Naive thymus-derived CD4-positive, alpha-beta T cell (primary cell): ENCODE measurements at regions of chr19 and their contacts with region 1.

Region 1: DNA sequence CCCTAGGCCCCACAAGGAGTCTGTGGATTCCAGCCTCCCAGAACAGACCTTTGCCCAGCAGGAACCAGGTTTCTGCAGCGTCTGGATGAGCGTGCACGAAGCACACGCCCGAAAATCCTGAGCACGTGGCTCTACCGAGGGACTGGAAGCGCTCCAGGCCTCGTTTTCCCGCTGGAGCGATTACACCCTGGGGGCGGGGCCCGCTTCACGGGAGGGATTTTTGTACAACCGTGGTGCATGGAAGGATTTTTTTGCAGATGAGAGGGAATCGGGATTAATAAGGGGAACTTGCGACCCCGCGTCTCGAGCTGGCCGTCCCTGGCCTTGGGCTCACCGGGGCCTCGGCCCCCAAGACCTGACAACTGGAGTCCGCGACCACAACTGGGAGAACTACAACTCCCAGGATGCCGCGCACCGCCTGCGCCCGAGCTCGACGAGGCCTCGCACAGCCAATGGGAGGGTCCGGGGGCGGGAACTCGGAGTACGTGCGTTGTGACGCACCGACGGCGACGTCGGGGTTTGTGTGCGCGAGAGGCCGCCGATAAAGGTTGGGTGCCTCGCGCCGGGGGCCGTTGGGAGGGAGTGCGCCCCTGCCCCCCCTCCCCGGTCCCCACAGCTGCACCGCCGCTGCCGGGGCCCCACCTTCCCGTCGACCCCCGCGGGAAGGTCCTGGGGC is at the start of gene ZNF628:
- DNase-seq: peak; percentile 88 to 98 (median 96)
- ATAC-seq: peak; percentile 96
- H3K4me3 ChIP-seq: peak within 1 kb of the TSS; percentile 96
- H3K4me3 Mint-ChIP-seq: peak within 1 kb of the TSS; percentile 83 to 93 (median 90)
- H3K27ac ChIP-seq: peak within 1 kb of the TSS; percentile 90
- H3K27ac Mint-ChIP-seq: peak within 1 kb of the TSS; percentile 81 to 95 (median 92)
- H3K4me1 ChIP-seq: peaks cover 14 to 15% of the 10 kb centered on the region in 2 donors
- H3K4me1 Mint-ChIP-seq: peaks cover 15 to 41% (median 29%) of the 10 kb centered on the region in 7 donors
- H3K27me3 ChIP-seq: no peaks in the 10 kb centered on the region
- H3K27me3 Mint-ChIP-seq: no peaks in the 10 kb centered on the region
- total RNA-seq, gene ZNF628: 6.6 to 27.2 (median 9.0) TPM

Region 2: DNA sequence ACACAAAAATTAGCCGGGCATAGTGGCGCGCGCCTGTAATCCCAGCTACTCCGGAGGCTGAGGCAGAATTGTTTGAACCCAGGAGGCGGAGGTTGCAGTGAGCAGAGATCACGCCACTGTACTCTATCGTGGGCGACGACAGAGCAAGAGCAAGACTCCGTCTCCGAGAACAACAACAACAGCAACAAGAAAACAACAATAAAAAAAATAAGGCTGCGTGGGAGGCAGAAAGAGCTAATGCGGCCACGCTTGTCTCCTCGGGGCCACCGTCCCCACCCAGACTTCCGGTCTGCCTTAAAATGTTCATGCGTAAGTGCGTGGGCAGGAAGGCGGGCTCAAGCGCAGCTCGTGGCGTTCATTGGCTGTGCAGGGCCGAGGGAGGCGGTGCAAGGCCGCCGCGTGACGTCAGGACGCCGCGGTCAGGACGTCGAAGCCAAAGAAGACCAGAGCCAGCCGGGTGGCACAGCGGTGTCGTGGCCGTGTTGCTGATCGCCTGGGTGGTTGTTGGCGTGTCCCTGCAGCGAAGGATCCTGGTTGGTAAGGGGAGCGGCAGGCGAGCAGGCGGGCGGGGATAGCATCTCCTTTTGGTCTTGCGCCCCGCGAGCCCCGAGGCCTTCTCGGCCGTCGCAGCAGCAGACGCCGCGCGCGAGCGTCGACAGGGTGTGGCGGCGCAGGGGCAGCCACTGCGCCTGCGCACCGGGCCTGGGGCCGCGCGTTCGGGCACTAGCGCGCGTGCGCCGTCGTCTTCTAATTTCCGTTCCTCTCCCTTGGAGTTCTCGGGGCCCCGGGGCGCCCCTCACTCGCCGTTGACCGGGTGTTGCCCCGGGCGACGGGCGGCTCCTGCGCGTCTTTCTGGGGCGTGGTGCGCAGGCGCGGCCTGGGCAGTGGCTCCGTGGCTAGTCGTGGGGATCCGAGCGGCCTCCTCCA is 1027.2 kb before region 1 on chr19 and contains the start of gene LENG8:
- CTCF ChIA-PET with region 1: no interaction called
- POLR2A ChIA-PET with region 1: interaction called, 3 read pairs
- intact Hi-C with region 1: loop called in 1 of 2 experiments (anchors 2 kb)
- DNase-seq: peak; percentile 95 to 99 (median 98)
- ATAC-seq: peak; percentile 94
- H3K4me3 ChIP-seq: peak within 1 kb of the TSS; percentile 85
- H3K4me3 Mint-ChIP-seq: peak within 1 kb of the TSS; percentile 93 to 99 (median 97)
- H3K27ac ChIP-seq: peak within 1 kb of the TSS; percentile 94
- H3K27ac Mint-ChIP-seq: peak within 1 kb of the TSS; percentile 97 to 100 (median 100)
- H3K4me1 ChIP-seq: peaks cover 19 to 39% of the 10 kb centered on the region in 2 donors
- H3K4me1 Mint-ChIP-seq: peaks cover 31 to 61% (median 54%) of the 10 kb centered on the region in 7 donors
- H3K27me3 ChIP-seq: no peaks in the 10 kb centered on the region
- H3K27me3 Mint-ChIP-seq: peaks cover 0 to 3% (median 0%) of the 10 kb centered on the region in 5 donors
- total RNA-seq, gene LENG8: 238 to 685 (median 503) TPM

Region 3: DNA sequence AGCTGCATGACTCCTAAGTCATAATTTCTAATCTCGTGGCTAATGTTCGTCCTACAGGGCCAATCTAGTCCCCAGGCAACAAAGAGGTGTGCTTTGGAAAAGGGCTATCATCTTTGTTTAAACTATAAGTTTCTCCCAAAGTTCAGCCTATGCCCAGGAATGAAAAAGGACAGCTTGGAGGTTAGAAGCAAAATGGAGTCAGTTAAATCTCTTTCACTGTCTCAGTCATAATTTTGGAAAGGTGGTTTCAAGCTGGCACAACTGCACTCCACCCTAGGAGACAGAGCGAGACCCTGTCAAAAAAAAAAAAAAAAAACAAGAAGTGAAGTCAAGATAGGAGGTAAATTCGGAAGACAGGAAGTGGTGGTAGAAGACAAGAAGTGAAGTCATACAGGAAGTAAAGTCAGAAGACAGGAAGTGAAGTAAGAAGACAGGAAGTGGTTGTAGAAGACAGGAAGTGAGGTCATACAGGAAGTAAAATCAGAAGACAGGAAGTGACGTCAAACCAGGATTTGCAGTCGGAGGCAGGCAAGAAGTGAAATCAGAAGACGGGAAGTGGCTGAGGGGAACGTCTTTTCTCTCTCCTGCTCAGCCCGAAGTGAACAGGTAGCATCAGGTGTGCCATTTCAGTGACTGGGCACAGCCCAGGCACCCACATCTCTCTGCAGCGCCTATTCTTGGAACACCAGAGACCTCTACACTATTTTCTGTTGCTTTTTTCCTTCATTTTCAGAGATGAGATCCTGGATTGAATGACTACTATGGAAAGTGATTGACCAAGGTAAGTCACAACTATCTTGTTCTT is 470.4 kb before region 1 on chr19:
- CTCF ChIA-PET with region 1: no interaction called
- POLR2A ChIA-PET with region 1: no interaction called
- intact Hi-C with region 1: loop called in 1 of 2 experiments (anchors 5 kb)
- DNase-seq: peak; percentile 26 to 92 (median 88)
- ATAC-seq: peak; percentile 92
- H3K4me3 ChIP-seq: peak overlapping the region; percentile 51
- H3K4me3 Mint-ChIP-seq: peak overlapping the region; percentile 75 to 92 (median 84)
- H3K27ac ChIP-seq: peak overlapping the region; percentile 75
- H3K27ac Mint-ChIP-seq: peak overlapping the region; percentile 86 to 98 (median 92)
- H3K4me1 ChIP-seq: peaks cover 0 to 8% of the 10 kb centered on the region in 2 donors
- H3K4me1 Mint-ChIP-seq: peaks cover 26 to 47% (median 40%) of the 10 kb centered on the region in 7 donors
- H3K27me3 ChIP-seq: peaks cover 0 to 3% of the 10 kb centered on the region in 2 donors
- H3K27me3 Mint-ChIP-seq: peaks cover 3 to 41% (median 35%) of the 10 kb centered on the region in 5 donors

Region 4: GRCh38 chr19:55279770-55280643 is 196.2 kb before region 1 on chr19 and contains the start of gene HSPBP1:
- CTCF ChIA-PET with region 1: no interaction called
- POLR2A ChIA-PET with region 1: interaction called, 3 read pairs
- intact Hi-C with region 1: loop called (anchors 1 to 2 kb)
- DNase-seq: peak; percentile 88 to 96 (median 96)
- ATAC-seq: peak; percentile 92
- H3K4me3 ChIP-seq: peak within 1 kb of the TSS; percentile 91
- H3K4me3 Mint-ChIP-seq: peak within 1 kb of the TSS; percentile 92 to 100 (median 98)
- H3K27ac ChIP-seq: peak within 1 kb of the TSS; percentile 89
- H3K27ac Mint-ChIP-seq: peak within 1 kb of the TSS; percentile 91 to 100 (median 98)
- H3K4me1 ChIP-seq: peaks cover 6 to 32% of the 10 kb centered on the region in 2 donors
- H3K4me1 Mint-ChIP-seq: peaks cover 12 to 52% (median 39%) of the 10 kb centered on the region in 7 donors
- H3K27me3 ChIP-seq: no peaks in the 10 kb centered on the region
- H3K27me3 Mint-ChIP-seq: peaks cover 0 to 9% (median 0%) of the 10 kb centered on the region in 5 donors
- total RNA-seq, gene HSPBP1: 15.0 to 30.0 (median 16.0) TPM

Region 5: GRCh38 chr19:55407800-55408532 is 68.3 kb before region 1 on chr19:
- CTCF ChIA-PET with region 1: no interaction called
- POLR2A ChIA-PET with region 1: interaction called, 11 read pairs
- intact Hi-C with region 1: loop called in 1 of 2 experiments (anchors 1 kb)
- DNase-seq: peak; percentile 94 to 99 (median 97)
- ATAC-seq: peak; percentile 93
- H3K4me3 ChIP-seq: peak overlapping the region; percentile 89
- H3K4me3 Mint-ChIP-seq: peak overlapping the region; percentile 86 to 97 (median 92)
- H3K27ac ChIP-seq: peak overlapping the region; percentile 96
- H3K27ac Mint-ChIP-seq: peak overlapping the region; percentile 93 to 100 (median 99)
- H3K4me1 ChIP-seq: peaks cover 17 to 24% of the 10 kb centered on the region in 2 donors
- H3K4me1 Mint-ChIP-seq: peaks cover 21 to 36% (median 26%) of the 10 kb centered on the region in 7 donors
- H3K27me3 ChIP-seq: no peaks in the 10 kb centered on the region
- H3K27me3 Mint-ChIP-seq: peaks cover 0 to 12% (median 0%) of the 10 kb centered on the region in 5 donors

Region 6: GRCh38 chr19:55605207-55605636 is 129.0 kb after region 1 on chr19:
- CTCF ChIA-PET with region 1: interaction called, 3 read pairs
- POLR2A ChIA-PET with region 1: interaction called, 15 read pairs
- intact Hi-C with region 1: no loop called
- DNase-seq: peak; percentile 90 to 99 (median 97)
- ATAC-seq: peak; percentile 87
- H3K4me3 ChIP-seq: peak overlapping the region; percentile 51
- H3K4me3 Mint-ChIP-seq: peak overlapping the region; percentile 78 to 98 (median 90)
- H3K27ac ChIP-seq: peak overlapping the region; percentile 90
- H3K27ac Mint-ChIP-seq: peak overlapping the region; percentile 77 to 96 (median 91)
- H3K4me1 ChIP-seq: peaks cover 7 to 18% of the 10 kb centered on the region in 2 donors
- H3K4me1 Mint-ChIP-seq: peaks cover 37 to 70% (median 64%) of the 10 kb centered on the region in 7 donors
- H3K27me3 ChIP-seq: no peaks in the 10 kb centered on the region
- H3K27me3 Mint-ChIP-seq: peaks cover 0 to 3% (median 0%) of the 10 kb centered on the region in 5 donors

Region 7: DNA sequence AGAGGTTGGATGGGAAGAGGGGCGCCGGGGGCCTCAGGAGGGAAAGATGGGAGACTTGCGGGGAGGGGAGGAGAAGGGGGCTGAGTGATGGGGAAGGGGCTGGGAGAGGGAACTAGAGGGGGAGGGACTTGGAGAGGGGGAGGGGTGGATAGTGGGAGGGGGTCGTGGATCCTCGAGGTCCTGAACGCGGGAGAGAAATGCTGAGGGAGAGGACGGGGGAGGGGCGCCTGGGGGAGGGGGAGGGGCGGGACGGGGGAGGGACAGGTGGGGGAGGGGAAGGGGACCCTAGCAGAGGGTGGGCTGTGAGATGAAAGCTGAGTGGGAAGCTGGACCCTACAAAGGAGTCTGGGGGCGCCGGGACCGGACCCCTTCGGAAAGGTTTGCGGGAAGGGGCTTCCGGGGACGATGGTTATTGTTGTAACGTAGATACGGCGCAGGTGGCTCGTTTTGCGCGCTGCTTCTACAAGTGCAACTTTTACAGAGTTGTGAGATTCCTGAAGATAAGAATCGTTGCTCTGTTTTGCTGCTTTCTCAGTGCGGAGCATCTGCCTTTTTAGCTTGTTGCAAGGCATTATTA is 665.3 kb after region 1 on chr19:
- CTCF ChIA-PET with region 1: no interaction called
- POLR2A ChIA-PET with region 1: no interaction called
- intact Hi-C with region 1: no loop called
- DNase-seq: peak; percentile 29 to 72 (median 54)
- ATAC-seq: no peak
- H3K4me3 ChIP-seq: peak overlapping the region; percentile 60
- H3K4me3 Mint-ChIP-seq: peak overlapping the region; percentile 88 to 97 (median 92)
- H3K27ac ChIP-seq: peak overlapping the region; percentile 85
- H3K27ac Mint-ChIP-seq: peak overlapping the region; percentile 84 to 98 (median 91)
- H3K4me1 ChIP-seq: peaks cover 4 to 22% of the 10 kb centered on the region in 2 donors
- H3K4me1 Mint-ChIP-seq: peaks cover 27 to 49% (median 43%) of the 10 kb centered on the region in 7 donors
- H3K27me3 ChIP-seq: no peaks in the 10 kb centered on the region
- H3K27me3 Mint-ChIP-seq: peaks cover 0 to 4% (median 0%) of the 10 kb centered on the region in 5 donors